Adrenal gland (tissue), 19 donors: ENCODE measurements at regions of chr20 and their contacts with region 1.

Region 1: DNA sequence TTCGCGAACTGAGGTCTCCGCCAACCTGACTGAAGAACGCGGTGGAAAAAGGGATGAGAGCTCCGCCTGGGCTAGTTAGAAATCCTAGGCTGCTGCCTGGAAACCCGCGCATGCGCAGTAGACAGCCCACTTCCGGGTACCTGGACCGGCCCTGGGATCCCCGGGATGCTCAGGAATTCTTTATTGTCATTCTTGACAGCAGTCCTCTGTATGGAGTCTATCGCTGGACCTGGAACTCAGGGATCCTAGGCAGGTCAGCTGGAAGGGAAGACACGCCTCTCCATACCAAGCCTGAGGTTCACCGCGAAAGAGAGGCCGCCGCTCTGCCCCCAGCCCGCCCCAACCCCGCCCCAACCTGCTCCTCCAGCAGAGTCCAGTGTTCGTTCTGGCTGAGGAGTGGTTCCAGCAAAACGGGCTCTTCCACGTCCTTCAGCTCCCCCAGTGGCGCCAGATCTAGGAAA is 1379.2 kb upstream of the DEFB115 start:
- DNase-seq: peak in 2 of 7 donors; percentile 15 to 20
- H3K4me3 ChIP-seq: no peak overlapping the region
- H3K27ac ChIP-seq: no peak overlapping the region
- H3K4me1 ChIP-seq: no peaks in the 10 kb centered on the region
- H3K27me3 ChIP-seq: no peaks in the 10 kb centered on the region
- CTCF ChIP-seq: no peak
- POLR2A ChIP-seq: no peak

Region 2: GRCh38 chr20:29119141-29119540 is 759.2 kb before region 1 on chr20:
- intact Hi-C with region 1: loop called in 1 of 2 experiments (anchors 5 kb)
- DNase-seq: no peak
- H3K4me3 ChIP-seq: no peak overlapping the region
- H3K27ac ChIP-seq: no peak overlapping the region
- H3K4me1 ChIP-seq: no peaks in the 10 kb centered on the region
- H3K27me3 ChIP-seq: no peaks in the 10 kb centered on the region
- CTCF ChIP-seq: no peak
- POLR2A ChIP-seq: no peak

Region 3: DNA sequence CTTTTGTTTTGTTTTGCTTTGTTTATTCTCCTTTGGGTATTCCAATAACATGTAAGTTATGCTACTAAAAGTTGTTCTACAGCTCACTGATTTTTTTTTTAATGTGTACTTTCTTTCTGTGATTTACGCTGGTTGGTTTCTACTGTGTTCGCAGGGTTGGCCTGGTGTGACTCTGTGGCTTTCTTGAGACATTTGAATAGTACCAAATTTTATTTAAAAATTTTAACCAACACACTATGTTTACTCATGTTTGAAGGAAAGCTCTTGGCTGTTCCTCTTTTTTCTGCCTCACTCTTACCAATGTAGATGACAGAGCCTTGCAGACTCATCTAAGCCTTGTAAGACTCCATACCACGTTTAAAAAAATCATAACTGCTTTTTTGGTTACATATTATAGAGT is 405.7 kb before region 1 on chr20:
- intact Hi-C with region 1: no loop called
- DNase-seq: no peak
- H3K4me3 ChIP-seq: no peak overlapping the region
- H3K27ac ChIP-seq: no peak overlapping the region
- H3K4me1 ChIP-seq: no peaks in the 10 kb centered on the region
- H3K27me3 ChIP-seq: no peaks in the 10 kb centered on the region
- CTCF ChIP-seq: no peak
- POLR2A ChIP-seq: no peak

Region 4: GRCh38 chr20:30488941-30489613 is 610.8 kb after region 1 on chr20:
- intact Hi-C with region 1: no loop called
- DNase-seq: peak in 1 of 7 donors; percentile 20
- H3K4me3 ChIP-seq: no peak overlapping the region
- H3K27ac ChIP-seq: no peak overlapping the region
- H3K4me1 ChIP-seq: no peaks in the 10 kb centered on the region
- H3K27me3 ChIP-seq: no peaks in the 10 kb centered on the region
- CTCF ChIP-seq: no peak
- POLR2A ChIP-seq: no peak

Region 5: DNA sequence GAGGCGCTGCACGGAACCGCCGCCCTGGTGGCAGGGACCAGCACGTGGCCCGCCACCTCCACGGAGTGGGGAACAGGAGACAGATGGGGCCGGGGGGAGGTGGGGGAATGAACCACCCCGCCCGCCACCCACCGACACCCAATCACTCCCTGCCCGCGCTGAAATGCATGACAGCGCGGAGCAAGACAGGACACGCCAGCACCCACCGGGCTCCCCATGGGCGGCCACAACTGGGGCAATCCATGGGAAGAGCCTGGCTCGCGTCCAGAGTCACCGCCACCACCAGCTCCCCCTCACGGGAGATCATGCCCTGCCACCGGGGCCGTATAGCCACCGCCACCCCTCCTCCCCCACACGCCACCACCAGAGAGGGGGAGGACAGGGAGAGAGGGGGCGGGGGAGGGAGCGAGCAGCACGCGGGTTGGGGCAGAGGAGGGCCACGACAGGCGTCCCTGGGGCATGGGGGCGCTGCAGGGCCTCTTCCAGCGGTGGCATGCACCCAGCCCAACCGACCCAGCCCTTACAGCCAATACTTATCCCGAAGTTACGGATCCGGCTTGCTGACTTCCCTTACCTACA is 634.8 kb after region 1 on chr20:
- intact Hi-C with region 1: no loop called
- DNase-seq: no peak
- H3K4me3 ChIP-seq: no peak overlapping the region
- H3K27ac ChIP-seq: no peak overlapping the region
- H3K4me1 ChIP-seq: no peaks in the 10 kb centered on the region
- H3K27me3 ChIP-seq: no peaks in the 10 kb centered on the region
- CTCF ChIP-seq: no peak
- POLR2A ChIP-seq: no peak